MCF 10A (cell line): ENCODE measurements at regions of chr2 and their contacts with region 1.

Region 1: DNA sequence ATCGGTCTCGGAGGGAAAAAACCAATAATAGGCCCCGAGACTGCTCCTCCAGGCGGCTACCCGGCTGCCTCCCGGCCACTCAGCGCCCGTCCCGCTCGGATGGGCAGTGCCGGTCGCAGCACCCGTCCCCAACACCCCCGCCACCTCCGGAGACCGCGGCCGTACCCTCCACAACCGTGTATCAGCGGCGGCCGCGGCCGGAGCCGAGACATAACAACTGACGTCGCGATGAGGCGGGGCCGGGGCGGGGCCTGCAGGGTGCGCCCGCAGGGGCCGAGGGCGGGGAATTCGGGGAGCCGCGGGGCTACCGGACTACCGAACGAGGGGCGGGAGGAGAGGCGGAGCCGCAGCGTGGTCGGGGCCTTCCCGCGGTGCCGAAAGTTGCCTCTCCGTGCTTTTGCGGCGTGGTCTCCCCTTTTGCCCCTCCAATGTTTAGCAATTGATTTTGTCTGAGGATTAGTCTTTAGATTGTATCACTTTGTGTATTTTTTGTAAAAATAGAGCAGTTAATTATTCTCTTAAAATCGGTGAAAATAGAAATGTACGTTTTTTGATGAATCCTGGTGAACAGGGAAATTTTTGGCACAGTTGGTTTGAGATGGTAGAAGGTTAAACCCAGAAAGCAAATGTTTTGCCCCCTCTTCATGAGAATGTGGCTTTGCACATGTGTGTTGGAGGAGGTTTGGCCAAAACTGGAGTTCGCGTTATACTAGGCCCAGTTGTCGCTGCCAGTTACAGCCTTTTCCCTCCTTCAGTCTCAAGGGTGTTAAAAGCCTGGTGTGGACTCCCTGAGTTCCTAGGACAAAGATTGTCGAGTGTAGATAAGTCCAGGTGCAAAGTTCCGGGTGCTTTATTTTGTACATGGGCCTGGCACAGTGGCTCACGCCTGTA is at the start of gene RNF103:
- DNase-seq: peak; percentile 92
- H3K4me3 Mint-ChIP-seq: peak within 1 kb of the TSS; percentile 95
- H3K27ac Mint-ChIP-seq: peak within 1 kb of the TSS; percentile 98
- H3K4me1 Mint-ChIP-seq: peaks cover 6% of the 10 kb centered on the region
- H3K27me3 Mint-ChIP-seq: no peaks in the 10 kb centered on the region
- CTCF ChIP-seq: no peak
- total RNA-seq, gene RNF103: 12.4 and 18.4 TPM in 2 replicates

Region 2: GRCh38 chr2:85409845-85410583 is 1213.9 kb before region 1 on chr2 and contains the start of gene CAPG:
- CTCF ChIA-PET with region 1: no interaction called
- POLR2A ChIA-PET with region 1: no interaction called
- intact Hi-C with region 1: no loop called
- DNase-seq: peak; percentile 73
- H3K4me3 Mint-ChIP-seq: peak within 1 kb of the TSS; percentile 70
- H3K27ac Mint-ChIP-seq: peak within 1 kb of the TSS; percentile 83
- H3K4me1 Mint-ChIP-seq: peaks cover 34% of the 10 kb centered on the region
- H3K27me3 Mint-ChIP-seq: no peaks in the 10 kb centered on the region
- CTCF ChIP-seq: no peak
- total RNA-seq, gene CAPG: 173 and 188 TPM in 2 replicates

Region 3: DNA sequence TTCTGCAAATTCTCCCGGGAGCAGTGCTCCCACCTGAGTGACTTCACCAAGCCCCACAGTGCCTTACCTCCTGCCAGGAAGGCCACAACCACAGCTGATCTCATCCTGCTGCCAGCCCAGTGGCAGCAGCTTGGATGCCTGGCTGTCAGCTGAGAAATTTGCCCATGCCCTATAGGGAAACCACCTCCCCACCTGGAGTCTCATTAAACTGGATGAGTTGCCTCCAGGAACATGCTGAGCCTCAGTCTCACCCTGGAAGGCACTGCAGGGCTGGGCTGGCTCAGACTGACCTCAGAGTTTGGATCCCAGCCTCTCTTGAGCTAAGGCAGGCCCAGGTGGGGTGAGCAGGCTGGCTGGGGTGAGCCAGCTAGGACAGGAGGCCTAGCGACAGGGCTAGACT is 309.8 kb before region 1 on chr2:
- CTCF ChIA-PET with region 1: no interaction called
- POLR2A ChIA-PET with region 1: no interaction called
- intact Hi-C with region 1: no loop called
- DNase-seq: no peak
- H3K4me3 Mint-ChIP-seq: no peak overlapping the region
- H3K27ac Mint-ChIP-seq: no peak overlapping the region
- H3K4me1 Mint-ChIP-seq: no peaks in the 10 kb centered on the region
- H3K27me3 Mint-ChIP-seq: peaks cover 16% of the 10 kb centered on the region
- CTCF ChIP-seq: no peak

Region 4: GRCh38 chr2:86498468-86499250 is 125.2 kb before region 1 on chr2:
- CTCF ChIA-PET with region 1: no interaction called
- POLR2A ChIA-PET with region 1: interaction called, 21 read pairs
- intact Hi-C with region 1: loop called (anchors 5 kb)
- DNase-seq: peak; percentile 94
- H3K4me3 Mint-ChIP-seq: no peak overlapping the region
- H3K27ac Mint-ChIP-seq: peak overlapping the region; percentile 21
- H3K4me1 Mint-ChIP-seq: peaks cover 13% of the 10 kb centered on the region
- H3K27me3 Mint-ChIP-seq: no peaks in the 10 kb centered on the region
- CTCF ChIP-seq: no peak

Region 5: GRCh38 chr2:86562922-86563649 is 60.8 kb before region 1 on chr2 and contains the start of gene CHMP3:
- CTCF ChIA-PET with region 1: no interaction called
- POLR2A ChIA-PET with region 1: interaction called, 48 read pairs
- intact Hi-C with region 1: loop called (anchors 2 kb)
- DNase-seq: peak; percentile 98
- H3K4me3 Mint-ChIP-seq: peak within 1 kb of the TSS; percentile 94
- H3K27ac Mint-ChIP-seq: peak within 1 kb of the TSS; percentile 100
- H3K4me1 Mint-ChIP-seq: peaks cover 26% of the 10 kb centered on the region
- H3K27me3 Mint-ChIP-seq: no peaks in the 10 kb centered on the region
- CTCF ChIP-seq: no peak
- total RNA-seq, gene CHMP3: 123 and 131 TPM in 2 replicates

Region 6: GRCh38 chr2:86598966-86599365 is 24.9 kb before region 1 on chr2:
- CTCF ChIA-PET with region 1: no interaction called
- POLR2A ChIA-PET with region 1: interaction called, 15 read pairs
- intact Hi-C with region 1: no loop called
- DNase-seq: peak; percentile 50
- H3K4me3 Mint-ChIP-seq: no peak overlapping the region
- H3K27ac Mint-ChIP-seq: peak overlapping the region; percentile 24
- H3K4me1 Mint-ChIP-seq: peaks cover 5% of the 10 kb centered on the region
- H3K27me3 Mint-ChIP-seq: no peaks in the 10 kb centered on the region
- CTCF ChIP-seq: no peak

Region 7: GRCh38 chr2:86610871-86611270 is 13.0 kb before region 1 on chr2:
- CTCF ChIA-PET with region 1: no interaction called
- POLR2A ChIA-PET with region 1: interaction called, 11 read pairs
- intact Hi-C with region 1: no loop called
- DNase-seq: no peak
- H3K4me3 Mint-ChIP-seq: no peak overlapping the region
- H3K27ac Mint-ChIP-seq: no peak overlapping the region
- H3K4me1 Mint-ChIP-seq: peaks cover 5% of the 10 kb centered on the region
- H3K27me3 Mint-ChIP-seq: no peaks in the 10 kb centered on the region
- CTCF ChIP-seq: no peak

Region 8: GRCh38 chr2:86636842-86637241 is 12.9 kb after region 1 on chr2:
- CTCF ChIA-PET with region 1: no interaction called
- POLR2A ChIA-PET with region 1: no interaction called
- intact Hi-C with region 1: no loop called
- DNase-seq: no peak
- H3K4me3 Mint-ChIP-seq: no peak overlapping the region
- H3K27ac Mint-ChIP-seq: no peak overlapping the region
- H3K4me1 Mint-ChIP-seq: no peaks in the 10 kb centered on the region
- H3K27me3 Mint-ChIP-seq: no peaks in the 10 kb centered on the region
- CTCF ChIP-seq: no peak

Region 9: DNA sequence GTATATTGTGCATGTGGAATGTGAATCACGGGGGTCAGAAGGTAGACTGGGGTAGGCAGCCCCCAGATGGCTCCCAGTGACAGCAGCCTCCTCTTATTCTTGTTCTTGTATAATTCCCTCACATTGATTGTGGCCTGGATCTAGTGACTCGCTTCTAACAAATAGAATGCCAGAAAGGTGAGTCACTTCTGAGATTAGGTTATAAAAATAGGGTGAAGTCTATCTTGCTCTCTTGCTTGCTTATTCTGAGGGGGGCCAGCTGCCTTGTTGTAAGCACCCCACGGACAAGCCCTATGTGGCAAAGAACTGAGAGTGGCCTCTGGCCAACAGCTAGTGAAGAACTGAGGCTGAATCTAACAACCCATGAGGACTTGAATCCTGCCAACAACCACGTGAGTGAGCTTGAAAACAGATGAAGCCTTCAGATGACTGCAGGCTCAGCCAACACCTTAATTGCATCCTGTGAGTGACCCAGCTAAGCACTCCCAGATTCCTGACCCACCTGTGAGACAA is 80.6 kb after region 1 on chr2:
- CTCF ChIA-PET with region 1: interaction called, 7 read pairs
- POLR2A ChIA-PET with region 1: interaction called, 37 read pairs
- intact Hi-C with region 1: no loop called
- DNase-seq: peak; percentile 71
- H3K4me3 Mint-ChIP-seq: peak overlapping the region; percentile 55
- H3K27ac Mint-ChIP-seq: peak overlapping the region; percentile 84
- H3K4me1 Mint-ChIP-seq: peaks cover 19% of the 10 kb centered on the region
- H3K27me3 Mint-ChIP-seq: no peaks in the 10 kb centered on the region
- CTCF ChIP-seq: no peak

Region 10: GRCh38 chr2:86764661-86765307 is 140.9 kb after region 1 on chr2:
- CTCF ChIA-PET with region 1: interaction called, 3 read pairs
- POLR2A ChIA-PET with region 1: no interaction called
- intact Hi-C with region 1: loop called (anchors 5 kb)
- DNase-seq: peak; percentile 47
- H3K4me3 Mint-ChIP-seq: no peak overlapping the region
- H3K27ac Mint-ChIP-seq: no peak overlapping the region
- H3K4me1 Mint-ChIP-seq: no peaks in the 10 kb centered on the region
- H3K27me3 Mint-ChIP-seq: no peaks in the 10 kb centered on the region
- CTCF ChIP-seq: peak; percentile 49